CD8-positive, alpha-beta T cell (primary cell): ENCODE measurements at regions of chr19 and their contacts with region 1.

Region 1: GRCh38 chr19:11505032-11505503 is 571 bp downstream of the ZNF653 start:
- DNase-seq: peak; percentile 92 to 98 (median 96)
- ATAC-seq: peak; percentile 95
- H3K4me3 ChIP-seq: peak overlapping the region; percentile 56 to 96
- H3K4me3 Mint-ChIP-seq: peak overlapping the region; percentile 93
- H3K27ac ChIP-seq: peak overlapping the region; percentile 58 to 97
- H3K27ac Mint-ChIP-seq: peak overlapping the region; percentile 84
- H3K4me1 ChIP-seq: peaks cover 14% of the 10 kb centered on the region
- H3K4me1 Mint-ChIP-seq: peaks cover 18% of the 10 kb centered on the region
- H3K27me3 ChIP-seq: no peaks in the 10 kb centered on the region
- H3K27me3 Mint-ChIP-seq: no peaks in the 10 kb centered on the region
- CTCF ChIP-seq: no peak

Region 2: DNA sequence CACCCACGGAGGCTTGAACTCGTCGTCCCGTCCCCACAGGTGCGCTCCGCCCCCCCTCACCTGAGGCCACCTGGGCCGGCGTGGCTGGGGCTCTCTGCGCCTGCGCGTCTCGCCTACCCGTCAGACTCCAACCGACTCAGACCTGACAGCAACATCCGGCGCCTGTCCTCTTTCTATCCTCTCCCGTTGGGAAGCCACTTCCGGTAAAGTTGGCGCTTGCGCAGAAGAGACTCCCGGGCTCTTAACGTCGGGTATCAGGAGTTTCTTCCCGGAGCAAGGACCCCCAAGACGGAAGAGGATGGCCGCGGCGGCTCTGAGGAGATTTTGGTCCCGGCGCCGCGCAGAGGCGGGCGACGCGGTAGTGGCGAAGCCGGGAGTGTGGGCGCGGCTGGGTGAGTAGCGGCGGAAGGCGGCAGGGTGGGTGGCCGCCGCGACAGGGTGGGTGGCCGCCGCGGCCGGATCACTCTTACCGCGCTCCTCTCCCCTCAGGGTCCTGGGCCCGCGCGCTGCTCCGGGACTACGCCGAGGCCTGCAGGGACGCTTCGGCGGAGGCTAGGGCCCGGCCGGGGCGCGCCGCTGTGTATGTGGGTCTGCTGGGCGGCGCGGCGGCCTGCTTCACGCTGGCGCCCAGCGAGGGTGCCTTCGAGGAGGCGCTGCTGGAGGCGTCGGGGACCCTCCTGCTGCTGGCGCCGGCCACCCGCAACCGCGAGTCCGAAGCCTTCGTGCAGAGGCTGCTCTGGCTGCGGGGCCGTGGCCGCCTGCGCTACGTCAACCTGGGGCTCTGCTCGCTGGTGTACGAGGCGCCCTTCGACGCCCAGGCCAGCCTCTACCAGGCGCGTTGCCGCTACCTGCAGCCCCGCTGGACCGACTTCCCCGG is 576.3 kb before region 1 on chr19 and contains the starts of genes TIMM29 and YIPF2:
- CTCF ChIA-PET with region 1: no interaction called
- POLR2A ChIA-PET with region 1: no interaction called
- intact Hi-C with region 1: loop called in 1 of 2 experiments (anchors 2 kb)
- DNase-seq: peak; percentile 86 to 97 (median 94)
- ATAC-seq: peak; percentile 88
- H3K4me3 ChIP-seq: peak within 1 kb of the TSS; percentile 73 to 86
- H3K4me3 Mint-ChIP-seq: peak within 1 kb of the TSS; percentile 95
- H3K27ac ChIP-seq: peak within 1 kb of the TSS; percentile 63 to 78
- H3K27ac Mint-ChIP-seq: peak within 1 kb of the TSS; percentile 91
- H3K4me1 ChIP-seq: peaks cover 17% of the 10 kb centered on the region
- H3K4me1 Mint-ChIP-seq: peaks cover 31% of the 10 kb centered on the region
- H3K27me3 ChIP-seq: no peaks in the 10 kb centered on the region
- H3K27me3 Mint-ChIP-seq: no peaks in the 10 kb centered on the region
- CTCF ChIP-seq: no peak
- total RNA-seq, gene TIMM29: 27.9 TPM
- total RNA-seq, gene YIPF2: 25.9 to 27.6 TPM

Region 3: DNA sequence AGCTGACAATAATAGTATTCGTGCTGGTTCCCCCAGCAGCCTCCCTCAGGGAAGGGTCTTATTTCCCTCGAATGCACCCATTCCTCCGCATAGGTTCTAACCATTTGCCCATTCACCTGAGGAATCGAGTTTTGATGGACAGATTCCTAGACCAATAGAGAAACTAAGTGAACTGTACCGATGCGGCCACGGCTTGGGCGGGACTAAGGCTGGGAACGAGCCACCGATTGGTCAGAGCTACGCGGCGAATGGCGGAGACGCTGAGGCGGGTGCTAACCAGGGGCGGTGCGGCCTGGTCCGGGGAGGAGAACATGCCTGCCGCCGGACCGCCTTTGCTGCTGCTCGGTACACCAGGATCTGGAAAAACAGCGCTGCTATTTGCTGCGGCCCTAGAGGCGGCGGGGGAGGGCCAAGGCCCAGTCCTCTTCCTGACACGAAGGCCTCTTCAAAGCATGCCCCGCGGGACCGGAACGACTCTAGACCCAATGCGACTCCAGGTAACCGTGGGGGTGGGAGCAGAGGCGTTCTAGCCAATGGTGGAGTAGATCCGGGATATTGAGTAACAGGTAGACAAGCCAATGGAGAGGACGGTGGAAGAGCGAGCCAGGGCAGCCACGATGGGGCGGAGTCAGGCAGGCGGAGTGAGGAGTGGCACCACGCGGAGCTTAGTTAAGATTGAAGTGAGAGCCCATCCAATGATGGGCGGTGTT is 130.5 kb before region 1 on chr19 and contains the start of gene SWSAP1:
- CTCF ChIA-PET with region 1: no interaction called
- POLR2A ChIA-PET with region 1: no interaction called
- intact Hi-C with region 1: loop called in 1 of 2 experiments (anchors 1 kb)
- DNase-seq: peak; percentile 91 to 100 (median 96)
- ATAC-seq: peak; percentile 88
- H3K4me3 ChIP-seq: peak within 1 kb of the TSS; percentile 73 to 80
- H3K4me3 Mint-ChIP-seq: no peak within 1 kb of the TSS
- H3K27ac ChIP-seq: peak within 1 kb of the TSS; percentile 83 to 98
- H3K27ac Mint-ChIP-seq: no peak within 1 kb of the TSS
- H3K4me1 ChIP-seq: peaks cover 28% of the 10 kb centered on the region
- H3K4me1 Mint-ChIP-seq: peaks cover 20% of the 10 kb centered on the region
- H3K27me3 ChIP-seq: no peaks in the 10 kb centered on the region
- H3K27me3 Mint-ChIP-seq: no peaks in the 10 kb centered on the region
- CTCF ChIP-seq: no peak
- total RNA-seq, gene SWSAP1: 2.2 to 2.4 TPM

Region 4: GRCh38 chr19:11435058-11435832 is 69.8 kb before region 1 on chr19 and contains the starts of genes ODAD3 and PRKCSH:
- CTCF ChIA-PET with region 1: no interaction called
- POLR2A ChIA-PET with region 1: no interaction called
- intact Hi-C with region 1: loop called in 1 of 2 experiments (anchors 1 kb)
- DNase-seq: peak; percentile 94 to 99 (median 97)
- ATAC-seq: peak; percentile 95
- H3K4me3 ChIP-seq: peak within 1 kb of the TSS; percentile 97 to 98
- H3K4me3 Mint-ChIP-seq: peak within 1 kb of the TSS; percentile 99
- H3K27ac ChIP-seq: peak within 1 kb of the TSS; percentile 77 to 84
- H3K27ac Mint-ChIP-seq: peak within 1 kb of the TSS; percentile 95
- H3K4me1 ChIP-seq: peaks cover 16% of the 10 kb centered on the region
- H3K4me1 Mint-ChIP-seq: peaks cover 25% of the 10 kb centered on the region
- H3K27me3 ChIP-seq: no peaks in the 10 kb centered on the region
- H3K27me3 Mint-ChIP-seq: peaks cover 2% of the 10 kb centered on the region
- CTCF ChIP-seq: peak; percentile 92
- total RNA-seq, gene ODAD3: not detected
- total RNA-seq, gene PRKCSH: 253 to 255 TPM

Region 5: GRCh38 chr19:11528551-11529341 is 23.7 kb after region 1 on chr19 and contains the start of gene ECSIT:
- CTCF ChIA-PET with region 1: no interaction called
- POLR2A ChIA-PET with region 1: interaction called, 3 read pairs
- intact Hi-C with region 1: loop called (anchors 1 kb)
- DNase-seq: peak; percentile 83 to 96 (median 91)
- ATAC-seq: peak; percentile 98
- H3K4me3 ChIP-seq: peak within 1 kb of the TSS; percentile 85 to 92
- H3K4me3 Mint-ChIP-seq: peak within 1 kb of the TSS; percentile 97
- H3K27ac ChIP-seq: peak within 1 kb of the TSS; percentile 62 to 89
- H3K27ac Mint-ChIP-seq: peak within 1 kb of the TSS; percentile 96
- H3K4me1 ChIP-seq: peaks cover 19% of the 10 kb centered on the region
- H3K4me1 Mint-ChIP-seq: peaks cover 16% of the 10 kb centered on the region
- H3K27me3 ChIP-seq: no peaks in the 10 kb centered on the region
- H3K27me3 Mint-ChIP-seq: no peaks in the 10 kb centered on the region
- CTCF ChIP-seq: no peak
- total RNA-seq, gene ECSIT: 31.1 to 32.4 TPM

Region 6: DNA sequence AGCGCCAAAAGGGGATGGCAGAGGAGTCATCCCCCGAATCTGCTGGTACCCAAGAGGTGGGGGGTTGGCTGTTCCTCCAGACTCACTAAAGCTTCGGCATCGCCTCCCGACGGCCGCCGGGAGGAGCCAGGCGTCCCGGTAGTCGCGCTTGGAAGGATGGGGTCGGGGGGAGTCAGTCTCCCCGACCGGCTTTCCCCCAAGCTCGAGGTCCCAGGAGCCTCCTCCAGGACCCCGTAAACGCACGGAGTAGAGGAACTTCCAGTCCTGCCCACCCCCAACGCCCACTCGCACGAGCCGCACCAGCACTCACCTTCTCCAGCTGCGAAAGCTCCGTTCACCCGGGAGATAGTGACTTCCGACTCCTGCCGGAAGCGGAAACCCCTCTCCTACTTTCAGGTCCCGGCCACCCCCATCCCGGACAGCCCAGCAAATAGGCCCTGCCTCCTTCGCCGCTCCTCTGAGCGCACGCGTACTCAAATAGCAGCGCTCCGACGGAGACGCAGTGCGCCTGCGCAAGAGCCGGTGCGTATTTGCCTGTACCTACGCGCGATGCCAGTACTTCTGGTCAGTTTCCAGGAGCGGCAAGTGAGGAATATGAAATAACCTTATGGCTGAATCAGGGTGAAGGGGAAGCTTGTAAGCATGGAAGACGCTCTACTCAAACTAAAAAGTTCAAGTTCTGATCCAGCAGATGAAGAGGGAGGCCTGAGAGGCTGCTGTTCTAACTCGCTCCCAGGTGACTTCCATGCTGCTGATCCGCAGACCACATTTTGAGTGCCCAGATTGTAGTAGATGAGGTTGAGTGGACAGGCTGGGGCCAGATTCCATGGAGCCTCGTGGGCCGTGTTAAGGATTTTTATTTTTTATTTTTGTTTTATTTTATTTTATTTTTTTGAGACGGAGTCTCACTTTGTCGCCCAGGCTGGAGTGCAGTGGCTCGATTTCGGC is 54.1 kb after region 1 on chr19 and contains the start of gene ELOF1:
- CTCF ChIA-PET with region 1: no interaction called
- POLR2A ChIA-PET with region 1: no interaction called
- intact Hi-C with region 1: loop called (anchors 1 kb)
- DNase-seq: peak; percentile 90 to 99 (median 97)
- ATAC-seq: peak; percentile 94
- H3K4me3 ChIP-seq: peak within 1 kb of the TSS; percentile 83 to 87
- H3K4me3 Mint-ChIP-seq: peak within 1 kb of the TSS; percentile 93
- H3K27ac ChIP-seq: peak within 1 kb of the TSS; percentile 74 to 78
- H3K27ac Mint-ChIP-seq: peak within 1 kb of the TSS; percentile 93
- H3K4me1 ChIP-seq: peaks cover 29% of the 10 kb centered on the region
- H3K4me1 Mint-ChIP-seq: peaks cover 39% of the 10 kb centered on the region
- H3K27me3 ChIP-seq: no peaks in the 10 kb centered on the region
- H3K27me3 Mint-ChIP-seq: no peaks in the 10 kb centered on the region
- CTCF ChIP-seq: no peak
- total RNA-seq, gene ELOF1: 40.3 to 41.0 TPM